ENCODE measurements at regions of chr10 and their contacts with region 1.

Region 1: GRCh38 chr10:113126229-113127201 is 176.5 kb downstream of the TCF7L2 start:
- DNase-seq: peak; percentile 73 to 83
- ATAC-seq: peak; percentile 97 to 99 (median 98)
- H3K4me3 ChIP-seq: peak overlapping the region; percentile 42
- H3K27ac ChIP-seq: no peak overlapping the region
- H3K4me1 ChIP-seq: peaks cover 4% of the 10 kb centered on the region
- H3K27me3 ChIP-seq: no peaks in the 10 kb centered on the region
- CTCF ChIP-seq: peak; percentile 88

Region 2: DNA sequence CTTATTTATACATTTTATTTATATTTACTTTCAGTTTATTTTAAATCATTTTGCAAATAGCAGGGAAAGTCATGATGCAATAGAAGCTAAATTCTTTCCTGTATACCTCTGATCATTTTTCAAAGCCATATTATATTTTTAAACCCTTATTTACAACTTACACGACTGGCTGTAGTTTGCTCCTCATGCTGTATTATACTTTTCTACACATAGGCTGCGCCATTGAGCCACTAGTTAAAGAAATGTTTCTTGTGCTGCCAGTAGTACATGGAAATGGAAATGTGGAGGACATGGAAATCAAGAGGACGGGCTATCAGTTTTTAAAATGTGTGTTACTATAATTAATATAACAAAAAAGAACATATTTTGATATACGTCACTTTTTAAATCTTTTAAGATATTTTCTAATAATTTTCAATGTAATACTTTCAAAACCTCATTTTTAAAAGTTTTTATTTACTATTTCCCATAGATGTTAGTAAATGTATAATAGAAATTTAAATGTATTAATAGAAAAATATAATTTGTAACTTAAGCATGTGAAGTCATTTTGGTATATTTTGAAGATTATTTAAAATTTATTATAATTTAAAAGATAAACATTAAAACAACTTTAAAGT is 561.0 kb before region 1 on chr10:
- intact Hi-C with region 1: loop called (anchors 10 kb)
- DNase-seq: no peak
- ATAC-seq: peak in 1 of 4 donors; percentile 72
- H3K4me3 ChIP-seq: no peak overlapping the region
- H3K27ac ChIP-seq: no peak overlapping the region
- H3K4me1 ChIP-seq: peaks cover 3% of the 10 kb centered on the region
- H3K27me3 ChIP-seq: no peaks in the 10 kb centered on the region
- CTCF ChIP-seq: peak; percentile 55

Region 3: GRCh38 chr10:112721080-112721698 is 405.3 kb before region 1 on chr10:
- intact Hi-C with region 1: loop called (anchors 5 to 10 kb)
- DNase-seq: no peak
- ATAC-seq: peak in 2 of 4 donors; percentile 54 to 80
- H3K4me3 ChIP-seq: no peak overlapping the region
- H3K27ac ChIP-seq: no peak overlapping the region
- H3K4me1 ChIP-seq: no peaks in the 10 kb centered on the region
- H3K27me3 ChIP-seq: no peaks in the 10 kb centered on the region
- CTCF ChIP-seq: peak; percentile 68